A673 (cell line): ENCODE measurements at regions of chr17 and their contacts with region 1.

Region 1: DNA sequence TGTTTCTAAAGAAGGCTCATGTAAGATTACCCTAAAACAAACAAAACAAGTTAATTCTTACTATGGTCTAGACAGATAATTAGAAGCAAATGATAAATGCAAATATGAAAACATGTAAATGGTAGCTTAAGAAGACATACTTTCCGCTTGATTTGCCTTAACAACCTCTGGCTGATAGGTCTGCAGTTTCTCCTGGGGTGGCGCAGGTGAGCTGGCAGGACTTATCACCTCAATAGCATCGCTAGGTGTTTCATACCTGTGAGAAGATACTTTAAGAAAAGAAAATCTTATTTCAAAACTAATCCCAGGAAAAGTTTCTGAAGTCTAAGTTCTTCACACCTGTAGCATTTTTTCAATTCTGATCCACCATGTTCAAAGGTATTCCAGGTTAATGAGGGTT is 58.7 kb downstream of the TTC19 start:
- DNase-seq: no peak
- H3K4me3 ChIP-seq: no peak overlapping the region
- H3K27ac ChIP-seq: no peak overlapping the region
- H3K4me1 ChIP-seq: no peaks in the 10 kb centered on the region
- H3K27me3 ChIP-seq: no peaks in the 10 kb centered on the region
- CTCF ChIP-seq: no peak

Region 2: DNA sequence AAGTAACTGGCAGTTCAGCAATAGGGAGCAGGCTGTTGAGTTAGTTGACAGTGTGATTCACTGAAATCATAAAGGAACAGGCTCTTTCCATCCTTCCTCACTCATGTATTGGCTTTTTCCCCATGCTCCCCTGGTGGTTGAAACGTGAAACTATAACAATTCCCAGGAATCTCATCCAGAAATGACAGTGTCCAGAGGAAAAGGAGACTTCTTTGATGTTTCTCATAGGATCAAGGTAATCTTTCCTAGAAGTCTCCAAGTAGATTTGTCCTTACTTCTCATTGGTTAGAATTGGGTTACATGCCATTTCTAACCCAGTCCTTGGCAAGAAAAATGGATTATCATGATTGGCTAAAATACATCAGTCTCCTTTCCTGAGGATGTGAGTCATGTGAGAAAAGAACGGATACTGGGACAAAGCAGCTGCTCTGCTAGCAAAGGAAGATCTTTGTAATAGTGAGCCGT is 44.4 kb before region 1 on chr17:
- CTCF ChIA-PET with region 1: no interaction called
- POLR2A ChIA-PET with region 1: interaction called, 10 read pairs
- intact Hi-C with region 1: no loop called
- DNase-seq: peak; percentile 57
- H3K4me3 ChIP-seq: no peak overlapping the region
- H3K27ac ChIP-seq: no peak overlapping the region
- H3K4me1 ChIP-seq: no peaks in the 10 kb centered on the region
- H3K27me3 ChIP-seq: no peaks in the 10 kb centered on the region
- CTCF ChIP-seq: peak; percentile 58

Region 3: GRCh38 chr17:16353317-16354174 is 295.2 kb after region 1 on chr17 and contains the start of gene CENPV:
- CTCF ChIA-PET with region 1: no interaction called
- POLR2A ChIA-PET with region 1: no interaction called
- intact Hi-C with region 1: no loop called
- DNase-seq: peak; percentile 78
- H3K4me3 ChIP-seq: peak within 1 kb of the TSS; percentile 63
- H3K27ac ChIP-seq: peak within 1 kb of the TSS; percentile 81
- H3K4me1 ChIP-seq: peaks cover 6% of the 10 kb centered on the region
- H3K27me3 ChIP-seq: no peaks in the 10 kb centered on the region
- CTCF ChIP-seq: no peak; the same call in 1 of the 2 replicates
- total RNA-seq, gene CENPV: 147 and 166 TPM in 2 replicates